ENCODE measurements at regions of chr1 and their contacts with region 1.

Region 1: DNA sequence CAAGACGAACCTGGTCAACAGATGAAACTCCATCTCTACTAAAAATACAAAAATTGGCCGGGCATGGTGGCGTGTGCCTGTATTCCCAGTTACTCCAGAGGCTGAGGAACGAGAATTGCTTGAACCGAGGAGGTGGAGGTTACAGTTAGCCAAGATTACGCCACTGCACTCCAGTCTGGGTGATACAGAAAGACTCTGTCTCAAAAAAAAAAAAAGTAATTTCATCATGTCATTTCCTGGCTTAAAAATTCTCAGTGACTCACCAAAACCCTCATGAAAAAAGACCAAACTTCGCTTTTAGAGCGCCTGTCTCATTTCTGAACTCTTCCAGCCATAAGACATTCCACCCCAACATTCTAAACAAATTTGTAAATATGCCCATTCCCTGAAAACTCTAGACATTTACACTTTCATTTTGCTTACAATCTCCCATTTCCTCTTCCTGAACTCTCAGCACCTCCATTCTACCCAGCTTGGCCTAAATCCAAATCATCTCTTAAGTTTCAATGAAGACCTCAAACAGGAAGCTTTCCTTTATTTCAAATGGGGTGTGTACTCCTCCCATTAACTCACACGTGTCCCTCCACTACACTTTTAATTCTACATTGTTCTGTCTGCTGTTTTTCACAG is 50.5 kb upstream of the PRRC2C start:
- DNase-seq: peak; percentile 92
- ATAC-seq: peak; percentile 19
- H3K4me3 ChIP-seq: peak overlapping the region; percentile 48
- H3K27ac ChIP-seq: peak overlapping the region; percentile 91
- H3K4me1 ChIP-seq: peaks cover 55% of the 10 kb centered on the region
- H3K27me3 ChIP-seq: no peaks in the 10 kb centered on the region
- CTCF ChIP-seq: no peak

Region 2: GRCh38 chr1:171506525-171507304 is 71.9 kb after region 1 on chr1:
- CTCF ChIA-PET with region 1: no interaction called
- POLR2A ChIA-PET with region 1: no interaction called
- intact Hi-C with region 1: no loop called
- DNase-seq: no peak
- ATAC-seq: no peak
- H3K4me3 ChIP-seq: no peak overlapping the region
- H3K27ac ChIP-seq: no peak overlapping the region
- H3K4me1 ChIP-seq: no peaks in the 10 kb centered on the region
- H3K27me3 ChIP-seq: no peaks in the 10 kb centered on the region
- CTCF ChIP-seq: no peak

Region 3: DNA sequence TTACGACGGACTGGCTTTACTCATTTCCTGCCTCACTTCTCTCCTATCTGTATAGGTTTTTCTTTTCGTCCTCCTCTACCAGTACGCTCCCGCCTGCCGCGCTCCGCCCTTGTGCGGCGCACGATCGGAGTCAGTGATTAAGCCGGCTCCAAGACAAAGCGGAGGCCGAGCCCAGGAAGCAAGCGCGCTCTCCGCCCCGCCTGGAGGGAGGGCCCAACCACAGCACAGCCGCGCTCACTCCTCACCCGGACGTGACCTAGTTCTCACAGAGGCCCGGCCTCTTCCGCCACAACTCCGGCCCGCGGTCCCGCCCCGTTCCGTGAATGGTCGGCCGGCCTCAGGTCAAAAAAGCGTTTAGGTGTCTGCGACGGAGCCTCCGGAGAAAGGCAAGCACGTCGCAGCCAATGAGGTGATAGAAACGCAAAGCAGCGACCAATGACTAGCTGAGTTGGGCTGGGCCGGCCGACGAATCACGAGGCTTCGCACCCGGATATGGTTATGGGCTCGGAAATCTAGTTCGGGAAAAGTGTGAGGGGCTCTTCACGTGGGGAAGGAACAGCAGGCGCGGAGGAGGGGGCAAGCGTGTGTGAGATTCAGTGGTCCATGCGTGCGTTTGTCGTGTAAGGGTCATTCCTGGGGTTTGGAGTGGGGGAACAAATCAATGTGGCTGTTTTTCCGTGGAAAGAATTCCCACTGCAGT is 346.5 kb after region 1 on chr1 and contains the start of gene METTL13:
- CTCF ChIA-PET with region 1: no interaction called
- POLR2A ChIA-PET with region 1: no interaction called
- intact Hi-C with region 1: loop called (anchors 5 kb)
- DNase-seq: peak; percentile 100
- ATAC-seq: peak; percentile 97
- H3K4me3 ChIP-seq: peak within 1 kb of the TSS; percentile 75
- H3K27ac ChIP-seq: peak within 1 kb of the TSS; percentile 61
- H3K4me1 ChIP-seq: peaks cover 39% of the 10 kb centered on the region
- H3K27me3 ChIP-seq: no peaks in the 10 kb centered on the region
- CTCF ChIP-seq: no peak
- total RNA-seq, gene METTL13: 115 and 138 TPM in 2 replicates